Activated CD4-positive, alpha-beta memory T cell treated with anti-CD3 and anti-CD28 coated beads for 36 hours (primary cell): ENCODE measurements at regions of chr16 and their contacts with region 1.

Region 1: GRCh38 chr16:71461686-71462648 is at the start of gene ZNF23:
- DNase-seq: peak; percentile 84
- H3K4me3 Mint-ChIP-seq: peak within 1 kb of the TSS; percentile 84
- H3K27ac Mint-ChIP-seq: peak within 1 kb of the TSS; percentile 77
- H3K4me1 Mint-ChIP-seq: peaks cover 18% of the 10 kb centered on the region
- H3K27me3 Mint-ChIP-seq: no peaks in the 10 kb centered on the region
- total RNA-seq, gene ZNF23: 5.7 to 8.5 TPM

Region 2: GRCh38 chr16:71484006-71484893 is 22.3 kb after region 1 on chr16:
- CTCF ChIA-PET with region 1: interaction called, 9 read pairs
- POLR2A ChIA-PET with region 1: interaction called, 13 read pairs
- intact Hi-C with region 1: loop called (anchors 1 kb)
- DNase-seq: peak; percentile 89
- H3K4me3 Mint-ChIP-seq: peak overlapping the region; percentile 81
- H3K27ac Mint-ChIP-seq: peak overlapping the region; percentile 74
- H3K4me1 Mint-ChIP-seq: peaks cover 13% of the 10 kb centered on the region
- H3K27me3 Mint-ChIP-seq: no peaks in the 10 kb centered on the region

Region 3: GRCh38 chr16:71515026-71515425 is 53.1 kb after region 1 on chr16:
- CTCF ChIA-PET with region 1: no interaction called
- POLR2A ChIA-PET with region 1: no interaction called
- intact Hi-C with region 1: no loop called
- DNase-seq: no peak
- H3K4me3 Mint-ChIP-seq: no peak overlapping the region
- H3K27ac Mint-ChIP-seq: no peak overlapping the region
- H3K4me1 Mint-ChIP-seq: no peaks in the 10 kb centered on the region
- H3K27me3 Mint-ChIP-seq: peaks cover 4% of the 10 kb centered on the region

Region 4: DNA sequence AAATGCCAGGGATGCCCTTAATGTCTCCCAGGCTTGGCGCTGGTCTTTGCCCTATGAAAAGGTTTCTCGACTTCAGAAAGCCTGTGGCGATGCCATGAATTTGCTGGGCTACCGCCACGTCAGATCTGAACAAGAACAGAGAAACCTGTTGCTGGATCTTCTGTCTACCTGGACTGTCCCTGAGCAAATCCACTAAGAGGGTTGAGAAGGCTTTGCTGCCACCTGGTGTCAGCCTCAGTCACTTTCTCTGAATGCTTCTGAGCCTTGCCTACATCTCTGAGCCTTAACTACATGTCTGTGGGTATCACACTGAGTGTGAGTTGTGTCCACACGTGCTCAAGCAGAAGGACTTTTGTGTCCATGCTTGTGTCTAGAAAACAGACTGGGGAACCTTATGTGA is 75.7 kb after region 1 on chr16:
- CTCF ChIA-PET with region 1: interaction called, 5 read pairs
- POLR2A ChIA-PET with region 1: no interaction called
- intact Hi-C with region 1: loop called (anchors 1 kb)
- DNase-seq: peak; percentile 58
- H3K4me3 Mint-ChIP-seq: no peak overlapping the region
- H3K27ac Mint-ChIP-seq: no peak overlapping the region
- H3K4me1 Mint-ChIP-seq: peaks cover 4% of the 10 kb centered on the region
- H3K27me3 Mint-ChIP-seq: peaks cover 6% of the 10 kb centered on the region

Region 5: DNA sequence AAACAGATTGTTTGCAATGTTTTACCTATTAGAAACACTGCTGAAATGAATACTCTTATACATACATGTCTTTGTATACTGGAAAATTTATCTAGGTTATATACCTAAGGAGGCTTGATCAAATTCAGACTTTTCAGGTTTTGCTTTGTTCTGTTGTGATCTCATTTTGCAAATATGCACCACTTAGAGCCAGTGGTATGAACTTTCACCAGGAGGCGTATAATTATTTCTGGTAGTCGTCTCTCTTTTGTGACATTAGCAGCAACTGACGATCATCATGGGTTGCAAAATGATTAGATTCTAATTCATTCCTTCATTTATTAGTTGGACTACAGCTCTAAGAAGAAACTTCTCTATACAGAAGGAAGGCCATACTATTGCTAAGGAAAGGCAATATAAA is 319.8 kb after region 1 on chr16:
- CTCF ChIA-PET with region 1: no interaction called
- POLR2A ChIA-PET with region 1: no interaction called
- intact Hi-C with region 1: no loop called
- DNase-seq: no peak
- H3K4me3 Mint-ChIP-seq: no peak overlapping the region
- H3K27ac Mint-ChIP-seq: no peak overlapping the region
- H3K4me1 Mint-ChIP-seq: peaks cover 32% of the 10 kb centered on the region
- H3K27me3 Mint-ChIP-seq: no peaks in the 10 kb centered on the region